ENCODE measurements at regions of chr11 and their contacts with region 1.

Region 1: GRCh38 chr11:30143098-30143705 is 87.6 kb upstream of the FSHB start:
- DNase-seq: peak; percentile 4 to 37
- ATAC-seq: peak; percentile 43 to 76; a peak in 3 of 6 replicates
- H3K4me3 ChIP-seq: no peak overlapping the region
- H3K27ac ChIP-seq: no peak overlapping the region
- H3K4me1 ChIP-seq: no peaks in the 10 kb centered on the region
- CTCF ChIP-seq: peak; percentile 65
- EP300 ChIP-seq: no peak
- POLR2A ChIP-seq: no peak
- RAD21 ChIP-seq: peak; percentile 38 to 44; a peak in 2 of 5 replicates

Region 2: GRCh38 chr11:29432719-29433325 is 710.4 kb before region 1 on chr11:
- CTCF ChIA-PET with region 1: interaction called, 20 read pairs
- POLR2A ChIA-PET with region 1: no interaction called
- DNase-seq: peak; percentile 11 to 17
- ATAC-seq: peak in 1 of 2 experiments; percentile 64; a peak in 3 of 6 replicates
- H3K4me3 ChIP-seq: no peak overlapping the region
- H3K27ac ChIP-seq: no peak overlapping the region
- H3K4me1 ChIP-seq: no peaks in the 10 kb centered on the region
- CTCF ChIP-seq: peak; percentile 65
- EP300 ChIP-seq: no peak
- POLR2A ChIP-seq: no peak
- RAD21 ChIP-seq: peak; percentile 58 to 68

Region 3: DNA sequence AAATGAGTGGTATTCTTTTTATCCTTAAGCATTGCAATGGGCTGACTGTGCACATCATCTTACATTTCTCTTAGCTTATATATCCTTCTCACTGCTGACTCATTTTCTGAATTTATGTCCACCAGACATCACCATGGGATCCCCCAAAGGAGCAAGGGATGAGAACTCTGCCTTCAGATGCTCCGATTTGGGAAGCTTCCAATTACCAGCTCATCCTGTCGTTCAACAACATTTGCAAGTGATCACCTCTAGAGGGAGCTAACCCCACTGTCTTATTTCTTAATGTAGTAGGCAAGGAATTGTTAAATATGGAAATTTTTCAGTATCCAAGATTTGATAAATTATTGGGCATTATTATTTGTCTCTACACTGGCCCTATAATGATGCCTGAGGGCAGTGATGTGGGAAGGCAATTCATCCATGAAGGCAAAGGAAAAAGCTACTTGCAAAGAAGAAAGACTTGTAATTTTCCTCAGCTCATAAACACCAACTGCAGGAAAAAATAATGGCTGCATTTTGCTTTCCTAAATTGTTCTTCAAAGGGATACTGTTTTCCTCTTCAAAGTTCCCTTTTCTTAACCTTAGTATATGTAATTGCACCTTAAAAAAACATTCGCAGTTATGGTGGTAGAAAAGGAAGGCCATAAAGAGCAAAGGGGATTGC is 14.8 kb before region 1 on chr11:
- CTCF ChIA-PET with region 1: interaction called, 81 read pairs
- POLR2A ChIA-PET with region 1: no interaction called
- DNase-seq: peak; percentile 22 to 42
- ATAC-seq: peak in 1 of 2 experiments; percentile 47; a peak in 2 of 6 replicates
- H3K4me3 ChIP-seq: no peak overlapping the region
- H3K27ac ChIP-seq: no peak overlapping the region
- H3K4me1 ChIP-seq: no peaks in the 10 kb centered on the region
- CTCF ChIP-seq: peak; percentile 48
- EP300 ChIP-seq: no peak
- POLR2A ChIP-seq: no peak
- RAD21 ChIP-seq: peak; percentile 17 to 33; a peak in 2 of 5 replicates

Region 4: DNA sequence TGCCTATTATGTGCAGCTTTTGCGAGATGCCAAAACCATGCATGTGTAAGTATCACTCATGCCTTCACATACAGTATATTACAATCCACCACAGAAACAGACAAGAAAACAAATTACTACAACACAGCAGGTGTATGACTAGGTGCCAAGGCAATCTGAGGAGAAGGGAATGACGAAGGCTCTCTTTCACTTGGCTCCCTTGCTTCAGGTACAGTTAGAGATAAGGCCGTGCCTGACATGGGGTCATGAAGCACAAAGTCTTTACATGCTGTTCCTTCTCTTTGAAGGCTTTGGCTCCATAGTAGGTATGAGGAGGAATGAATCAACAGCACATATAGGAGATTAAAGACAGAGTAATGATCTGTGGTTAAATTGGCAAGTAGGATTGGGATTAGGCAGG is 22.4 kb after region 1 on chr11:
- CTCF ChIA-PET with region 1: no interaction called
- POLR2A ChIA-PET with region 1: no interaction called
- DNase-seq: no peak
- ATAC-seq: no peak
- H3K4me3 ChIP-seq: no peak overlapping the region
- H3K27ac ChIP-seq: no peak overlapping the region
- H3K4me1 ChIP-seq: no peaks in the 10 kb centered on the region
- CTCF ChIP-seq: no peak
- EP300 ChIP-seq: no peak
- POLR2A ChIP-seq: no peak
- RAD21 ChIP-seq: no peak

Region 5: GRCh38 chr11:30196400-30197206 is 53.4 kb after region 1 on chr11:
- CTCF ChIA-PET with region 1: interaction called, 11 read pairs
- POLR2A ChIA-PET with region 1: no interaction called
- DNase-seq: peak; percentile 5 to 53
- ATAC-seq: peak; percentile 76 to 91; a peak in 5 of 6 replicates
- H3K4me3 ChIP-seq: no peak overlapping the region
- H3K27ac ChIP-seq: no peak overlapping the region
- H3K4me1 ChIP-seq: no peaks in the 10 kb centered on the region
- CTCF ChIP-seq: peak; percentile 57
- EP300 ChIP-seq: no peak
- POLR2A ChIP-seq: no peak
- RAD21 ChIP-seq: peak; percentile 52 to 60; a peak in 4 of 5 replicates

Measured in A549 (cell line).